ENCODE measurements at regions of chr17 and their contacts with region 1.

Region 1: GRCh38 chr17:16463358-16464302 is 28.4 kb downstream of the LRRC75A start:
- DNase-seq: no peak
- H3K4me3 ChIP-seq: no peak overlapping the region
- H3K27ac ChIP-seq: no peak overlapping the region
- H3K4me1 ChIP-seq: peaks cover 6 to 26% (median 10%) of the 10 kb centered on the region in 4 experiments
- H3K27me3 ChIP-seq: no peaks in the 10 kb centered on the region
- CTCF ChIP-seq: peak; percentile 40 to 60 (median 43); a peak in 3 of 4 replicates
- EP300 ChIP-seq: no peak
- POLR2A ChIP-seq: no peak
- RAD21 ChIP-seq: peak; percentile 24 to 52; a peak in 2 of 4 replicates

Region 2: DNA sequence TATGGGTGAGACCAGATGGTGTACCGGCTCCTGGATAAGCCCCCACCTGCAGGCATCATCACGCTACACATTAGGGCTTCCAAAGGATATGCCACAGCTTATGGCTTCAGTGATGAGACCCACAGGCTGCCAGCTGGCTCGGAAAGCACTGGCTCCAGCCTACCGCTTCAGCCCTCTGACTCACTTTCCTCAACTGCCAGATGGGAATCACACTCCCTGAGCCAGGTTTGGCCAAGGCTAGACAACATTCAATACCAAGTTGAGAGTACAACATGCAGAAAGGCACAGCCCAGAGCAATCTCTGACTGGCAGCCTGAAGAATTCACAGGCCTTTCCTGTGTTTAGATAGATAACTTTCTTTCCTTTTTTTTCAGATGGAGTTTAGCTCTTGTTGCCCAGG is 120.7 kb before region 1 on chr17:
- CTCF ChIA-PET with region 1: no interaction called
- POLR2A ChIA-PET with region 1: no interaction called
- DNase-seq: no peak
- H3K4me3 ChIP-seq: no peak overlapping the region
- H3K27ac ChIP-seq: no peak overlapping the region
- H3K4me1 ChIP-seq: no peaks in the 10 kb centered on the region
- H3K27me3 ChIP-seq: no peaks in the 10 kb centered on the region
- CTCF ChIP-seq: no peak
- EP300 ChIP-seq: no peak
- POLR2A ChIP-seq: no peak
- RAD21 ChIP-seq: no peak

Region 3: GRCh38 chr17:16491703-16492612 is 28.3 kb after region 1 on chr17 and contains the start of gene LRRC75A:
- CTCF ChIA-PET with region 1: interaction called, 176 read pairs
- POLR2A ChIA-PET with region 1: interaction called, 5 read pairs
- DNase-seq: peak in 1 of 2 experiments; percentile 74
- H3K4me3 ChIP-seq: peak within 1 kb of the TSS; percentile 46 to 71 (median 58)
- H3K27ac ChIP-seq: no peak within 1 kb of the TSS
- H3K4me1 ChIP-seq: peaks cover 11 to 37% (median 27%) of the 10 kb centered on the region in 4 experiments
- H3K27me3 ChIP-seq: peaks cover 0 to 23% (median 13%) of the 10 kb centered on the region in 4 experiments; a peak in 2 of 7 replicates
- CTCF ChIP-seq: peak in 2 of 3 experiments; percentile 32 to 53; a peak in 3 of 4 replicates
- EP300 ChIP-seq: no peak
- POLR2A ChIP-seq: no peak
- RAD21 ChIP-seq: peak in 1 of 2 experiments; percentile 34; a peak in 2 of 4 replicates
- total RNA-seq, gene LRRC75A: 7.2 and 9.9 TPM in 2 replicates